CD8-positive, alpha-beta T cell (primary cell): ENCODE measurements at regions of chr2 and their contacts with region 1.

Region 1: GRCh38 chr2:147843864-147844696 is 749 bp upstream of the ACVR2A start:
- DNase-seq: peak; percentile 71 to 90 (median 86)
- ATAC-seq: peak; percentile 80
- H3K4me3 ChIP-seq: peak overlapping the region; percentile 75 to 79
- H3K4me3 Mint-ChIP-seq: peak overlapping the region; percentile 93
- H3K27ac ChIP-seq: peak overlapping the region; percentile 51 to 54
- H3K27ac Mint-ChIP-seq: peak overlapping the region; percentile 55
- H3K4me1 ChIP-seq: peaks cover 19% of the 10 kb centered on the region
- H3K4me1 Mint-ChIP-seq: peaks cover 29% of the 10 kb centered on the region
- H3K27me3 ChIP-seq: no peaks in the 10 kb centered on the region
- H3K27me3 Mint-ChIP-seq: peaks cover 20% of the 10 kb centered on the region
- CTCF ChIP-seq: no peak

Region 2: DNA sequence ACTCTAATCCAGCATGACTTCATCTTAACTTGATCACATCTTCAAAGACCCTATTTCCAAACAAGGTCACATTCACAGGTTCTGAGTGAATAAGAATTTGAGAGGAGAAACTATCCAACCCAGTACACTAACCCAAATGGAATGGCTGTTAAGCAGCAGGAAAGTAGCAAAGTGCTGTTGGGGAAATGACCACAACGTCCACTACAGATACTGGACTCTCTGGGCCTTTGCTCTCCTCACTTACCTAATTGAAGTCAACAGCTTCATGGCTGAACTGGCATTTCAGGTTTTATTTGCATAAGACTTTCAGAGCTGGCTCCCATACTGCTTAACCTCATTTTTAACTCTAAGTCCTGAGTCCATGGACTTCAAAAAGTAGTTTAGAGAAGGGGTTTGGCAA is 37.2 kb before region 1 on chr2:
- CTCF ChIA-PET with region 1: no interaction called
- POLR2A ChIA-PET with region 1: no interaction called
- intact Hi-C with region 1: no loop called
- DNase-seq: no peak
- ATAC-seq: no peak
- H3K4me3 ChIP-seq: no peak overlapping the region
- H3K4me3 Mint-ChIP-seq: no peak overlapping the region
- H3K27ac ChIP-seq: no peak overlapping the region
- H3K27ac Mint-ChIP-seq: no peak overlapping the region
- H3K4me1 ChIP-seq: no peaks in the 10 kb centered on the region
- H3K4me1 Mint-ChIP-seq: no peaks in the 10 kb centered on the region
- H3K27me3 ChIP-seq: no peaks in the 10 kb centered on the region
- H3K27me3 Mint-ChIP-seq: no peaks in the 10 kb centered on the region
- CTCF ChIP-seq: no peak

Region 3: DNA sequence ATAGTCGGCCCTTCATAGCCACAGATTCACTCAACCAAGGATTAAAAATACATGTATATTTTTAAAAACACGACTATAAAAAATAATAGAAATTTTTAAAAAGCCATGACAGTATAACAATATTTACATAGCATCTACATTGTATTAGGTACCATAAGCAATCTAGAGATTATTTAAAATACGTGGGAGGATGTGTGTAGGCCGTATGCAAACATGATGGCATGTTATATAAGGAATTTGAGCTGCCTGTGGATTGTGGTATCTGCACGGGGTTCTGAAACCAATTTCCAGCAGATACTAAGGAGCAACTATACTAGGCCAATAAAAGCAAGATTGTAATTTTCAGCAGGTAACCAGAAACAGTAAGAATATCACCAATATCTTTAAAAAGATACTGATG is 170.5 kb after region 1 on chr2:
- CTCF ChIA-PET with region 1: no interaction called
- POLR2A ChIA-PET with region 1: no interaction called
- intact Hi-C with region 1: loop called in 1 of 2 experiments (anchors 5 kb)
- DNase-seq: no peak
- ATAC-seq: no peak
- H3K4me3 ChIP-seq: no peak overlapping the region
- H3K4me3 Mint-ChIP-seq: no peak overlapping the region
- H3K27ac ChIP-seq: no peak overlapping the region
- H3K27ac Mint-ChIP-seq: no peak overlapping the region
- H3K4me1 ChIP-seq: peaks cover 13% of the 10 kb centered on the region
- H3K4me1 Mint-ChIP-seq: peaks cover 74% of the 10 kb centered on the region
- H3K27me3 ChIP-seq: no peaks in the 10 kb centered on the region
- H3K27me3 Mint-ChIP-seq: no peaks in the 10 kb centered on the region
- CTCF ChIP-seq: no peak

Region 4: GRCh38 chr2:148020111-148021058 is 176.3 kb after region 1 on chr2 and contains the start of gene ORC4:
- CTCF ChIA-PET with region 1: no interaction called
- POLR2A ChIA-PET with region 1: interaction called, 5 read pairs
- intact Hi-C with region 1: loop called (anchors 2 to 5 kb)
- DNase-seq: peak; percentile 91 to 100 (median 96)
- ATAC-seq: peak; percentile 86
- H3K4me3 ChIP-seq: peak within 1 kb of the TSS; percentile 96 to 97
- H3K4me3 Mint-ChIP-seq: peak within 1 kb of the TSS; percentile 100
- H3K27ac ChIP-seq: peak within 1 kb of the TSS; percentile 85 to 94
- H3K27ac Mint-ChIP-seq: peak within 1 kb of the TSS; percentile 98
- H3K4me1 ChIP-seq: peaks cover 47% of the 10 kb centered on the region
- H3K4me1 Mint-ChIP-seq: peaks cover 73% of the 10 kb centered on the region
- H3K27me3 ChIP-seq: no peaks in the 10 kb centered on the region
- H3K27me3 Mint-ChIP-seq: no peaks in the 10 kb centered on the region
- CTCF ChIP-seq: no peak
- total RNA-seq, gene ORC4: 28.5 to 29.9 TPM

Region 5: DNA sequence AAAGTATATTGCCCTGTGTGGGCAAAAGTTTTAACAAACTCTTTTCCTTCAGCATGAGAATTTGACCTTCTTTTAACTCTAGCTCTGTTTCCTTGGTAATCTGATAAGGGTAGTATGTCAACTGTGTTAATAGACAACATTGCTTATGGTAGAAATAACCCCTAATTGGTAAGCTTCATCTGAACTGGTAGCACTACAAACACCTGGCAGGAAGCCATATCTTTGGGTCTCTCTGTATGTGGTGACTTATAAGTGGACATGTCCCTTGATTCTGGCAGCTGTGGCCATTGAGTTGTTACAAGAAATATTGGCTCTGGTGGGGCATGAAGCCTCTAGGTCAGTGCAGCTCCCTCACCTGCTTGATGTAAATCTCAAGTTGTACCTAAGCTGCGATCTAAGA is 223.7 kb after region 1 on chr2:
- CTCF ChIA-PET with region 1: no interaction called
- POLR2A ChIA-PET with region 1: no interaction called
- intact Hi-C with region 1: no loop called
- DNase-seq: no peak
- ATAC-seq: no peak
- H3K4me3 ChIP-seq: no peak overlapping the region
- H3K4me3 Mint-ChIP-seq: no peak overlapping the region
- H3K27ac ChIP-seq: no peak overlapping the region
- H3K27ac Mint-ChIP-seq: no peak overlapping the region
- H3K4me1 ChIP-seq: no peaks in the 10 kb centered on the region
- H3K4me1 Mint-ChIP-seq: peaks cover 9% of the 10 kb centered on the region
- H3K27me3 ChIP-seq: no peaks in the 10 kb centered on the region
- H3K27me3 Mint-ChIP-seq: no peaks in the 10 kb centered on the region
- CTCF ChIP-seq: no peak

Region 6: DNA sequence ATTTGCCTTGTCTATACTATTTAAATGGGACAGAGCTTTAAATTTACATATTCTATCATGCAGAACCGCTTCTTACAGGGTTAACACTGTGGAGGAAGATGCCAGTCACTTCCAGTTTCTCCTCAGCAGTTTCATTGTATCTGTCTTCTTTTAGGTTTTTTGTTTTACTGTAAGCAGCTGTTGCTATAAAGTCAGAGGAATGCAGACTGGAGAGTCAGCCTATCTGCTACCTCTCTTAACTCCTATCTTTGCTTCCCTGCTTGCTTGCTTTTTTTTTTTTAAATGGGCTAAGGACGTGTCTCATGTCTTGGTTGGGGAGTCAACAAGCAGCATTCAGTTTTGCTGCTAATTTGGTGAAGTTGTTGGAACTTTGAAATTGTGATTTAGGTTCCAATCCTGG is 809.4 kb after region 1 on chr2:
- CTCF ChIA-PET with region 1: no interaction called
- POLR2A ChIA-PET with region 1: no interaction called
- intact Hi-C with region 1: loop called (anchors 5 to 10 kb)
- DNase-seq: no peak
- ATAC-seq: no peak
- H3K4me3 ChIP-seq: no peak overlapping the region
- H3K4me3 Mint-ChIP-seq: peak overlapping the region; percentile 44
- H3K27ac ChIP-seq: no peak overlapping the region
- H3K27ac Mint-ChIP-seq: no peak overlapping the region
- H3K4me1 ChIP-seq: peaks cover 94% of the 10 kb centered on the region
- H3K4me1 Mint-ChIP-seq: peaks cover 93% of the 10 kb centered on the region
- H3K27me3 ChIP-seq: no peaks in the 10 kb centered on the region
- H3K27me3 Mint-ChIP-seq: no peaks in the 10 kb centered on the region
- CTCF ChIP-seq: no peak

Region 7: GRCh38 chr2:148874868-148875341 is 1030.8 kb after region 1 on chr2 and contains the start of gene KIF5C:
- CTCF ChIA-PET with region 1: no interaction called
- POLR2A ChIA-PET with region 1: no interaction called
- intact Hi-C with region 1: loop called (anchors 5 to 10 kb)
- DNase-seq: peak; percentile 77 to 94 (median 87)
- ATAC-seq: peak; percentile 87
- H3K4me3 ChIP-seq: peak within 1 kb of the TSS; percentile 49 to 52
- H3K4me3 Mint-ChIP-seq: peak within 1 kb of the TSS; percentile 86
- H3K27ac ChIP-seq: no peak within 1 kb of the TSS
- H3K27ac Mint-ChIP-seq: peak within 1 kb of the TSS; percentile 41
- H3K4me1 ChIP-seq: peaks cover 12% of the 10 kb centered on the region
- H3K4me1 Mint-ChIP-seq: peaks cover 18% of the 10 kb centered on the region
- H3K27me3 ChIP-seq: peaks cover 0 to 5% of the 10 kb centered on the region in 2 experiments
- H3K27me3 Mint-ChIP-seq: peaks cover 16% of the 10 kb centered on the region
- CTCF ChIP-seq: no peak
- total RNA-seq, gene KIF5C: 6.4 to 6.5 TPM

Region 8: GRCh38 chr2:149160701-149161217 is 1316.7 kb after region 1 on chr2:
- CTCF ChIA-PET with region 1: no interaction called
- POLR2A ChIA-PET with region 1: no interaction called
- intact Hi-C with region 1: loop called in 1 of 2 experiments (anchors 10 kb)
- DNase-seq: peak in 7 of 9 experiments; percentile 5 to 77 (median 50)
- ATAC-seq: peak; percentile 97
- H3K4me3 ChIP-seq: no peak overlapping the region
- H3K4me3 Mint-ChIP-seq: peak overlapping the region; percentile 53
- H3K27ac ChIP-seq: no peak overlapping the region
- H3K27ac Mint-ChIP-seq: no peak overlapping the region
- H3K4me1 ChIP-seq: peaks cover 18% of the 10 kb centered on the region
- H3K4me1 Mint-ChIP-seq: peaks cover 16% of the 10 kb centered on the region
- H3K27me3 ChIP-seq: no peaks in the 10 kb centered on the region
- H3K27me3 Mint-ChIP-seq: peaks cover 2% of the 10 kb centered on the region
- CTCF ChIP-seq: no peak